ENCODE measurements at regions of chr16 and their contacts with region 1.

Region 1: GRCh38 chr16:48609652-48610029 is 339 bp downstream of the N4BP1 start:
- DNase-seq: peak in 3 of 5 donors; percentile 66 to 85 (median 79)
- H3K4me3 ChIP-seq: peak overlapping the region; percentile 66
- H3K27ac ChIP-seq: peak overlapping the region; percentile 88 to 91
- H3K4me1 ChIP-seq: peaks cover 18% of the 10 kb centered on the region
- H3K27me3 ChIP-seq: no peaks in the 10 kb centered on the region
- CTCF ChIP-seq: no peak
- EP300 ChIP-seq: no peak
- POLR2A ChIP-seq: no peak

Region 2: GRCh38 chr16:48244080-48244862 is 365.4 kb before region 1 on chr16 and contains the start of gene LONP2:
- intact Hi-C with region 1: loop called in 1 of 4 experiments (anchors 10 kb)
- DNase-seq: peak; percentile 82 to 93 (median 88)
- H3K4me3 ChIP-seq: peak within 1 kb of the TSS; percentile 78
- H3K27ac ChIP-seq: peak within 1 kb of the TSS; percentile 69 to 75
- H3K4me1 ChIP-seq: peaks cover 8% of the 10 kb centered on the region
- H3K27me3 ChIP-seq: no peaks in the 10 kb centered on the region
- CTCF ChIP-seq: no peak
- EP300 ChIP-seq: no peak
- POLR2A ChIP-seq: peak; percentile 29
- total RNA-seq, gene LONP2: 45.7 to 101 (median 79.9) TPM

Region 3: DNA sequence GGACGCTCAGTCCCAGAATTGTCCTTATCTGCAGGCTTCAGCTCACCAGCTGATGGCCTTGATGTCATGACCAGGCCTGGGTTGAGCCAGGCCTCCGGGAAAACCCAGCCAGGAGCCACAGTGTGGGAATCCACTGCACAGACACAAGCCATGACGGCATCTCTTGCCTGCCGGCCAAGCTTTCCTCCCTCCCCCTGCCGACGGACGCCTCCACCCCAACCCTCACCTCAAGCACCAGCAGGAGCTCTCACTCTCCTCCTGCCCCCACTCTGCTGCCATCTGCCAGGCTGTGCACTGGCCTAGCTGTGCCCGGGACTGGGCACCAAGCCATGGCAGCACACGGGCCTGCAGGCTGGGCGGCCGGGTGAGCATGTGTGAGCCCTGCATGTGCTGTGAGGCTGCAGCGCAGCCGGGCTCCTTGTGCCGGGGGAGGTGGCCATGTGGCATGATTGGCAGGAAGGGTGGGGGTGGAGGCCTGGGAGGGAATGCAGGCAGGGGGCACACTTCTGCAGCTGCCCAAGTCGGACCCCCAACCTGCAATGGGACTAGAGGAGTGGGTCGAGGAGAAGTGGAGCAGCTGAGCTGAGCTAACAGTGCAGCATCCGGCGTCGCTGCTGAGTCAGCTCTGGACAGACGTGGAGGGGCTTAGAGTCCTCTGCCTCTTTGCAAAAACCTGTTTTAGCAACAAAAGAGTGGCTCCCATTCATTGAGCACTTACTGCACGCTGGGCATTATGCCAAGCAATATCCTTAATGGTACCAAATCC is 403.5 kb after region 1 on chr16:
- intact Hi-C with region 1: no loop called
- DNase-seq: peak in 2 of 5 donors; percentile 63 to 73
- H3K4me3 ChIP-seq: no peak overlapping the region
- H3K27ac ChIP-seq: no peak overlapping the region
- H3K4me1 ChIP-seq: peaks cover 24% of the 10 kb centered on the region
- H3K27me3 ChIP-seq: no peaks in the 10 kb centered on the region
- CTCF ChIP-seq: no peak
- EP300 ChIP-seq: no peak
- POLR2A ChIP-seq: no peak